WTC11 (cell line): ENCODE measurements at regions of chr1 and their contacts with region 1.

Region 1: GRCh38 chr1:109984456-109985275 is at the start of gene AHCYL1:
- DNase-seq: peak; percentile 99
- ATAC-seq: peak; percentile 93
- H3K4me3 Mint-ChIP-seq: peak within 1 kb of the TSS; percentile 96
- H3K27ac Mint-ChIP-seq: peak within 1 kb of the TSS; percentile 93
- H3K4me1 Mint-ChIP-seq: peaks cover 42% of the 10 kb centered on the region
- H3K27me3 Mint-ChIP-seq: no peaks in the 10 kb centered on the region; the same call in 1 of the 2 replicates
- CTCF ChIP-seq: peak; percentile 92
- total RNA-seq, gene AHCYL1: 92.1 to 99.4 TPM (median 98.6 TPM) in 3 replicates

Region 2: DNA sequence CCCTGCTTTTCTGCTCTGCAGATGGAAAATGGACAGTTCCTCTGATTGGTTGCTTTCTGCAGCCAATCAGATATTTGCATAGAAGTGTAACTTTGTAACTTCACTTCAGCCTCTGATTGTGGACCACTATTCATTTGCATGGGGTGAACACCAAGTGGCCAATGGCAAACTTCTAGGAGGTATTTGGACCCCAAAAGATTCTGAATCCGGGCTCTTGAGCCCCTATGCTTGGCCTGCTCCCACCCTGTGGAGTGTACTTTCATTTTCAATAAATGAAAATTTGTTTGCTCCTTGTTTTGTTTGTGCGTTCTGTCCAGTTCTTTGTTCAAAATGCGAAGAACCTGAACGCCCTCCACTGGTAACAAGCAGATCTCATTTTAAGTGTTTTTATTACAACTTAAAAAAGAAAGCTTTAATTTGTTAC is 335.2 kb before region 1 on chr1:
- CTCF ChIA-PET with region 1: interaction called, 13 read pairs
- POLR2A ChIA-PET with region 1: no interaction called
- DNase-seq: no peak
- ATAC-seq: no peak
- H3K4me3 Mint-ChIP-seq: no peak overlapping the region
- H3K27ac Mint-ChIP-seq: no peak overlapping the region
- H3K4me1 Mint-ChIP-seq: no peaks in the 10 kb centered on the region; the same call in 1 of the 2 replicates
- H3K27me3 Mint-ChIP-seq: peaks cover 26% of the 10 kb centered on the region
- CTCF ChIP-seq: no peak

Region 3: GRCh38 chr1:109790735-109791494 is 193.8 kb before region 1 on chr1:
- CTCF ChIA-PET with region 1: interaction called, 341 read pairs
- POLR2A ChIA-PET with region 1: interaction called, 7 read pairs
- DNase-seq: peak; percentile 53
- ATAC-seq: peak; percentile 19
- H3K4me3 Mint-ChIP-seq: no peak overlapping the region
- H3K27ac Mint-ChIP-seq: no peak overlapping the region
- H3K4me1 Mint-ChIP-seq: peaks cover 34% of the 10 kb centered on the region
- H3K27me3 Mint-ChIP-seq: peaks cover 4% of the 10 kb centered on the region; the same call in 1 of the 2 replicates
- CTCF ChIP-seq: no peak

Region 4: DNA sequence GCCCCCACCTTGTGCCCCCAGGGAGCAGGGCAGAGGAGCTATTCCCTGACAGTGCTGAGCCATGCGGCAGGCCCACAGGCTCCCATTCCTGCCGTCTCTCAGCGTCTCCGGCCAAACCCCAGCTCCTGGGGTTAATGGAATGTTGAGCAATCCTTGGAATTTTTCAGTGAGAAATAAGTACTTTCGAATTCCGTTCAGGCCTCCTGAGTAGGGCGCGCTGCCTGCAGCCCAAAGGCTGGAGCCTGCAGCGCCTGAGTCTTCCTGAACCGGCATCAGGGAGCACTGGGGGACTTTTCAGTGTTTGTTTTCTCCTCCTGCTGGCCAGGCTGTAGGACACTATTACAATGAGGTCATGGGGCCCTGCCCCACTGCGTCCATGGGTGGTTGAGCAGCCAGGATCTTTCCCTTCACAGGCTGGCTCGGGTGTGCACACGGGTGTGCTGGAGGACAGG is 107.3 kb before region 1 on chr1:
- CTCF ChIA-PET with region 1: interaction called, 16 read pairs
- POLR2A ChIA-PET with region 1: no interaction called
- DNase-seq: peak; percentile 64
- ATAC-seq: peak; percentile 88
- H3K4me3 Mint-ChIP-seq: no peak overlapping the region
- H3K27ac Mint-ChIP-seq: peak overlapping the region; percentile 89
- H3K4me1 Mint-ChIP-seq: peaks cover 65% of the 10 kb centered on the region
- H3K27me3 Mint-ChIP-seq: no peaks in the 10 kb centered on the region
- CTCF ChIP-seq: no peak

Region 5: GRCh38 chr1:109923131-109923945 is 61.3 kb before region 1 on chr1:
- CTCF ChIA-PET with region 1: interaction called, 80 read pairs
- POLR2A ChIA-PET with region 1: interaction called, 6 read pairs
- DNase-seq: peak; percentile 73
- ATAC-seq: peak; percentile 96
- H3K4me3 Mint-ChIP-seq: 0 out of 2 replicates have a peak overlapping the region, but pooled peaks have one; percentile 16
- H3K27ac Mint-ChIP-seq: no peak overlapping the region
- H3K4me1 Mint-ChIP-seq: no peaks in the 10 kb centered on the region
- H3K27me3 Mint-ChIP-seq: no peaks in the 10 kb centered on the region
- CTCF ChIP-seq: peak; percentile 72

Region 6: GRCh38 chr1:110003747-110004630 is 19.3 kb after region 1 on chr1:
- CTCF ChIA-PET with region 1: interaction called, 78 read pairs
- POLR2A ChIA-PET with region 1: interaction called, 8 read pairs
- DNase-seq: peak; percentile 38
- ATAC-seq: peak; percentile 78
- H3K4me3 Mint-ChIP-seq: peak overlapping the region; percentile 43
- H3K27ac Mint-ChIP-seq: peak overlapping the region; percentile 91
- H3K4me1 Mint-ChIP-seq: peaks cover 61% of the 10 kb centered on the region
- H3K27me3 Mint-ChIP-seq: no peaks in the 10 kb centered on the region
- CTCF ChIP-seq: no peak